WTC11 (cell line): ENCODE measurements at regions of chr7 and their contacts with region 1.

Region 1: GRCh38 chr7:94395141-94396036 is 694 bp downstream of the COL1A2 start:
- DNase-seq: peak; percentile 36
- ATAC-seq: peak; percentile 53
- H3K4me3 Mint-ChIP-seq: peak overlapping the region; percentile 87
- H3K27ac Mint-ChIP-seq: peak overlapping the region; percentile 78
- H3K4me1 Mint-ChIP-seq: peaks cover 43% of the 10 kb centered on the region
- H3K27me3 Mint-ChIP-seq: peaks cover 7% of the 10 kb centered on the region
- CTCF ChIP-seq: peak; percentile 86

Region 2: GRCh38 chr7:94289071-94289470 is 106.3 kb before region 1 on chr7:
- CTCF ChIA-PET with region 1: interaction called, 380 read pairs
- POLR2A ChIA-PET with region 1: interaction called, 15 read pairs
- DNase-seq: peak; percentile 77
- ATAC-seq: peak; percentile 99
- H3K4me3 Mint-ChIP-seq: no peak overlapping the region
- H3K27ac Mint-ChIP-seq: no peak overlapping the region
- H3K4me1 Mint-ChIP-seq: peaks cover 8% of the 10 kb centered on the region
- H3K27me3 Mint-ChIP-seq: no peaks in the 10 kb centered on the region
- CTCF ChIP-seq: peak; percentile 63

Region 3: GRCh38 chr7:94301024-94301586 is 94.3 kb before region 1 on chr7:
- CTCF ChIA-PET with region 1: interaction called, 142 read pairs
- POLR2A ChIA-PET with region 1: interaction called, 7 read pairs
- DNase-seq: peak; percentile 65
- ATAC-seq: peak; percentile 99
- H3K4me3 Mint-ChIP-seq: peak overlapping the region; percentile 42; the same call in 1 of the 2 replicates
- H3K27ac Mint-ChIP-seq: peak overlapping the region; percentile 84
- H3K4me1 Mint-ChIP-seq: peaks cover 47% of the 10 kb centered on the region
- H3K27me3 Mint-ChIP-seq: no peaks in the 10 kb centered on the region
- CTCF ChIP-seq: no peak

Region 4: DNA sequence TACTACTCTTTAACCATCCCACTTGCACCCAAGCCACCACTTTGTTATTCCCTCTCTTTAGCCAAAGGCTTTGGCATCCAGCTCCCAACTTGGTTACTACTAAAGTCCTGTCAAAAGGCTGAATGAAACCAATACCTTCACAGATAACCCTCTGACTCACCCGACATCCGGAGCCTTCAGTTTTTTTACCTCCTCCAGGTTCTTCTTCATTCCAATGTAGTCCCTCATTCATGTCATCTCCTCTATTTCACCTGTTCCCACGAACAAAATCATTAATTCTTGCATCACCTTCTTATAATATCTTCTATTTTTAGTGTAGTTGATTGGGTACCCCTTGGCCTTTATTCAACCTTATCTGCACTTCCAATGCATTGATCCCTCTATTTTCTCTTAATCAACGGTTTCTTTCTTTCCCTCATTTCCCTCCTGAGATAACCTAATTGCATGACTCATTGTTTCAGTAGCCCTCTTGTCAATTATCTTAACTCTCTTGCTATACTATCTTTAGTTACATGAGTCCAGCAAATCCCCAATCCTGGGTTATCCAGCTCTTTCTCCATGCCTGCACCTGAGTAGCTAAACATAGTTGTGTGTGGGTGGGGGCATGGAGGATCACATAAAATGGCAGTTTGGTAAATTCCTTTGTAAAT is 87.9 kb before region 1 on chr7:
- CTCF ChIA-PET with region 1: interaction called, 142 read pairs
- POLR2A ChIA-PET with region 1: no interaction called
- DNase-seq: no peak
- ATAC-seq: no peak
- H3K4me3 Mint-ChIP-seq: no peak overlapping the region
- H3K27ac Mint-ChIP-seq: no peak overlapping the region
- H3K4me1 Mint-ChIP-seq: peaks cover 26% of the 10 kb centered on the region
- H3K27me3 Mint-ChIP-seq: no peaks in the 10 kb centered on the region
- CTCF ChIP-seq: no peak

Region 5: DNA sequence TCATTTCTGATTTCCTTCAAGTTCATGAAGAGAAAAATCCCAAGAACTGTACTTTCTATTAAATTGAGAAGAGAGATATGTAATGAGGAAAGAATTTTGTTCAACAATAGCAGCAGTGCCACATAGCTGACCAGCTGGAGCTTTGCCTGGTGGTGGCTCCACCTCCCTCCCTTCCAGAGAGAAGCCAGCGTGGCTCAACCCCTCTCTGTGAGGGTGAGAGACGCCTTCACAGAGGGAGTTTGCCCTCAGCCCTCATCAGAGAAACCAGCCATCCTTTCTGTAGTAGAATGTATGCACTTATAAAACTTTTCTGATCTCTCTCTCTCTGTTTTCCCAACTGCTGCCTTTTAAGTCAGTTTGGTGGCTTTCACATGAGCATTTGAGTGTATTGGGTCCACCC is 21.2 kb before region 1 on chr7:
- CTCF ChIA-PET with region 1: interaction called, 36 read pairs
- POLR2A ChIA-PET with region 1: interaction called, 10 read pairs
- DNase-seq: peak; percentile 43
- ATAC-seq: peak; percentile 88
- H3K4me3 Mint-ChIP-seq: no peak overlapping the region; the same call in 1 of the 2 replicates
- H3K27ac Mint-ChIP-seq: peak overlapping the region; percentile 91; the same call in 1 of the 2 replicates
- H3K4me1 Mint-ChIP-seq: peaks cover 24% of the 10 kb centered on the region
- H3K27me3 Mint-ChIP-seq: no peaks in the 10 kb centered on the region
- CTCF ChIP-seq: no peak

Region 6: GRCh38 chr7:94436018-94436604 is 40.7 kb after region 1 on chr7:
- CTCF ChIA-PET with region 1: interaction called, 11 read pairs
- POLR2A ChIA-PET with region 1: no interaction called
- DNase-seq: peak; percentile 67
- ATAC-seq: peak; percentile 87
- H3K4me3 Mint-ChIP-seq: no peak overlapping the region
- H3K27ac Mint-ChIP-seq: no peak overlapping the region
- H3K4me1 Mint-ChIP-seq: peaks cover 21% of the 10 kb centered on the region
- H3K27me3 Mint-ChIP-seq: no peaks in the 10 kb centered on the region
- CTCF ChIP-seq: peak; percentile 68